ENCODE measurements at regions of chr11 and their contacts with region 1.

Region 1: GRCh38 chr11:119095066-119095880 is 6.4 kb downstream of the DPAGT1 start:
- DNase-seq: peak; percentile 99
- H3K4me3 ChIP-seq: peak overlapping the region; percentile 66 to 87 (median 68)
- H3K27ac ChIP-seq: peak overlapping the region; percentile 64
- H3K4me1 ChIP-seq: peaks cover 24% of the 10 kb centered on the region
- H3K27me3 ChIP-seq: no peaks in the 10 kb centered on the region
- CTCF ChIP-seq: no peak

Region 2: DNA sequence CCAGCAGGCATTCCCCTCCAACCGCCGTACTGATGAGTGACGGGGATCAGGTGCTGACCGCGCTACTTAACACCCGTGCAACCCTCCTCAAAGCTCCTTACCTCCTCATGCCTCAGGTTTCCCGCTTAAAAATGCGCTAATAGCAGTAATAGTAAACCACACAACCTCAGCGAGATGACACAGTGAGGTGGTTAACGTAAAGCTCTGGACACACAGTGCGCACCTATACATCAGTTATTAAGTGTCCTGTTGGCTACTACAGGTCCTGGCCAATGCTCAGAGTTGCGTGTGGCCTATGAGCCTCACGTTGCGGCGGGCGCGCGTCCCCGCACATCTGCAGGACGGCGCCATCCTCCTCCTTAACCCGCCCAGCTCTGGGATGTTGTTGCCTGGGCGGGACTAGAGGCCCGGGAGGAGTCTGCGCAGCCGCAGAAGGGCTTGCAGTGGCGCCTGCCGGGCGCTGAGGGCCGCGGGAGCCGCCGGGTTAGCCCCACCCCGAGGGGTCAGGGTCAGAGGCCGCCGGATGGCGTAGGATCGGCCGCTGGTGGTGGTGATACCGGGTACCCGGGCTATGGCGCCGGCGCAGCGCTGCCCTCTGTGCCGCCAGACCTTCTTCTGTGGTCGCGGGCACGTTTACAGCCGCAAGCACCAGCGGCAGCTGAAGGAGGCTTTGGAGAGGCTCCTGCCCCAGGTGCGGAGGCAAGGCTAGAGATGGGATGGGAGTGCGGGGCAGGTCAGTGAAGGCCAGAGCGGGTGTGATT is 97.5 kb before region 1 on chr11 and contains the start of gene CENATAC:
- CTCF ChIA-PET with region 1: no interaction called
- dilution Hi-C with region 1: no loop called
- in situ Hi-C with region 1: no loop called
- intact Hi-C with region 1: no loop called
- DNase-seq: peak; percentile 87
- H3K4me3 ChIP-seq: peak within 1 kb of the TSS; percentile 68 to 86 (median 80)
- H3K27ac ChIP-seq: peak within 1 kb of the TSS; percentile 81
- H3K4me1 ChIP-seq: peaks cover 30% of the 10 kb centered on the region
- H3K27me3 ChIP-seq: no peaks in the 10 kb centered on the region
- CTCF ChIP-seq: peak in 1 of 2 donors; percentile 17
- total RNA-seq, gene CENATAC: 37.8 to 46.9 TPM

Region 3: GRCh38 chr11:119057000-119057769 is 38.1 kb before region 1 on chr11 and contains the start of gene HYOU1:
- CTCF ChIA-PET with region 1: no interaction called
- dilution Hi-C with region 1: no loop called
- in situ Hi-C with region 1: no loop called
- intact Hi-C with region 1: loop called (anchors 1 kb)
- DNase-seq: peak; percentile 95
- H3K4me3 ChIP-seq: peak within 1 kb of the TSS; percentile 74 to 98 (median 95)
- H3K27ac ChIP-seq: peak within 1 kb of the TSS; percentile 62
- H3K4me1 ChIP-seq: peaks cover 20% of the 10 kb centered on the region
- H3K27me3 ChIP-seq: no peaks in the 10 kb centered on the region
- CTCF ChIP-seq: peak in 1 of 2 donors; percentile 36
- total RNA-seq, gene HYOU1: 160 to 187 TPM

Region 4: GRCh38 chr11:119084663-119085436 is 10.4 kb before region 1 on chr11 and contains the start of gene HMBS:
- CTCF ChIA-PET with region 1: no interaction called
- dilution Hi-C with region 1: no loop called
- in situ Hi-C with region 1: no loop called
- intact Hi-C with region 1: loop called (anchors 1 kb)
- DNase-seq: peak; percentile 91
- H3K4me3 ChIP-seq: peak within 1 kb of the TSS; percentile 89 to 96 (median 93)
- H3K27ac ChIP-seq: peak within 1 kb of the TSS; percentile 80
- H3K4me1 ChIP-seq: peaks cover 25% of the 10 kb centered on the region
- H3K27me3 ChIP-seq: no peaks in the 10 kb centered on the region
- CTCF ChIP-seq: no peak
- total RNA-seq, gene HMBS: 8.2 to 40.6 TPM

Region 5: DNA sequence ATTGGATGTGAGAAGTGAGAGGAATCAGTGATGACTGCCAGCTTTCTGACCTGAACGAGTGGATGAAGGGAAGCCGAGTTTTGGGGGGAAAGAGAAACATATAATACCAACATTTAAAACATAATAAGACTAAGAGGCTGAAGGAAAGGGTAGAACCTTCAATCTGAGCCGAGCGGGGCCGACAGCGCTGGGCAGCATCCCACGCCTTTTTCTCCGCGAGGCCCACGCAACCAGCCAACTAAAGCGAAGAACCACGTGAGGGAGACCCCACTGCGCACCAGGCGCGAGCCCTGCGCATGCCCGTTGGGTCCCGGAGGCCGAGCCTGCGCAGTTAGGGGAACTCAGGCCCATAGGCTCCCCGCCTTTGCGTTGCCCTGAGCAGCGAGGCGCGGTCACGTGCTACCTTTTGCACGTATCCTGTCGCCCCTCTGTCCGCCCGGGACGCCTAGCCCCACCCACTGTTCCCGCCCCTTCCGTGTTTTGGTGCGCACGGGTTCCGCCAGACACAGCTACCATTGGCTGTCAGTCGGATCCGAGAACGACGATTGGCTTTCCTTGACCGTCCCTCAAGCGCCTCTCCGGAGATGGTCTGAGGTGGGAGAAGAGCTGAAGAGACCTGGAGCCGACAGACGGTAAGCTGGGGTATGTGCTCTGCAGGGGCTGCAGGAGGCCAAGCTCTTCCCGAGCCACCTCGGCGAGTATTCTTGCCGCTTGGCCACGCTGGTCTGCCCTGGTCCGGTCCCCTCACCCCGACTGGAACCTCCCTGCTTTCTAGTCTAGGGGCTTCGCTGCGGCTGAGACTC is 25.9 kb after region 1 on chr11 and contains the start of gene HINFP:
- CTCF ChIA-PET with region 1: no interaction called
- dilution Hi-C with region 1: no loop called
- in situ Hi-C with region 1: no loop called
- intact Hi-C with region 1: loop called (anchors 1 kb)
- DNase-seq: peak; percentile 99
- H3K4me3 ChIP-seq: peak within 1 kb of the TSS; percentile 77 to 99 (median 94)
- H3K27ac ChIP-seq: peak within 1 kb of the TSS; percentile 79
- H3K4me1 ChIP-seq: peaks cover 12% of the 10 kb centered on the region
- H3K27me3 ChIP-seq: no peaks in the 10 kb centered on the region
- CTCF ChIP-seq: no peak
- total RNA-seq, gene HINFP: 23.7 to 26.8 TPM

Region 6: GRCh38 chr11:119168471-119169281 is 73.4 kb after region 1 on chr11 and contains the start of gene NLRX1:
- CTCF ChIA-PET with region 1: no interaction called
- dilution Hi-C with region 1: no loop called
- in situ Hi-C with region 1: no loop called
- intact Hi-C with region 1: loop called (anchors 2 kb)
- DNase-seq: peak; percentile 66
- H3K4me3 ChIP-seq: peak within 1 kb of the TSS; percentile 59 to 68 (median 66)
- H3K27ac ChIP-seq: peak within 1 kb of the TSS; percentile 84
- H3K4me1 ChIP-seq: peaks cover 35% of the 10 kb centered on the region
- H3K27me3 ChIP-seq: no peaks in the 10 kb centered on the region
- CTCF ChIP-seq: peak; percentile 83 to 93
- total RNA-seq, gene NLRX1: 13.5 to 15.5 TPM

Region 7: GRCh38 chr11:119196833-119197483 is 101.7 kb after region 1 on chr11:
- CTCF ChIA-PET with region 1: no interaction called
- dilution Hi-C with region 1: no loop called
- in situ Hi-C with region 1: loop called in 1 of 2 experiments (anchors 5 kb)
- intact Hi-C with region 1: loop called (anchors 1 kb)
- DNase-seq: peak; percentile 80
- H3K4me3 ChIP-seq: no peak overlapping the region
- H3K27ac ChIP-seq: no peak overlapping the region
- H3K4me1 ChIP-seq: no peaks in the 10 kb centered on the region
- H3K27me3 ChIP-seq: no peaks in the 10 kb centered on the region
- CTCF ChIP-seq: peak; percentile 72 to 74

Region 8: DNA sequence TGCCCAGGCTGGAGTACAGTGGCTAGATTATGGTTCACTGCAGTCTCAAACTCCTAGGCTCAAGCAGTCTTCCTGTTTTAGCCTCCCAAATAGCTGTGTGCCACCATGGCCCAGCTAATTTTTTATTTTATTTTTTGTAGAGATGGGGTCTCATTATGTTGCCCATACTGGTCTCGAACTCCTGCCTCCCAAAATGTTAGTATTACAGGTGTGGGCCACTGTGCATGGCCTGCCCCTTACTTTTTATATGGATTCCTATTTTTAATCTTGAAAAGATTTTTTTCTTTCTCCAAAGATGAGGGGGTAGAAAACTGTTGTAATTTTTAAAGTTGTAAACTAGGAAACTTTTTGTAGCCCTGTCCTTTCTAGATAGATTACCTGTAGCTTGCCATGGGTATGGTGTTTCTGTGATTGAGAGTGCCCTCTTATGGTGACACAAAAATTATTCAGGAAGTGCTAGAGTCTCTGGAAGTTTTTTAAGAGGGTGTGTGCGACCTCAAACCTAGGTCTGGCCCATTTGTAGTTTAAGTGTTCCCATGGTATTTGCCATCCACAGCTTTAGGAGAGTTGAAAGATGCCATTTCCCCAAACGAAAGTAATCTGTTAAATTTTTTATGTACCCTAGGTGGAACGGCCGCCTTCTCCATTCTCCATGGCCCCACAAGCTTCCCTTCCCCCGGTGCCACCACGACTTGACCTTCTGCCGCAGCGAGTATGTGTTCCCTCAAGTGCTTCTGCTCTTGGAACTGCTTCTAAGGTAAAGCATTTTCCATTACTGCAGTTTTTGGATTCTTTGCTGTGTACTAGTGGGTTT is 189.3 kb after region 1 on chr11:
- CTCF ChIA-PET with region 1: interaction called, 7 read pairs
- dilution Hi-C with region 1: no loop called
- in situ Hi-C with region 1: no loop called
- intact Hi-C with region 1: loop called (anchors 2 kb)
- DNase-seq: peak; percentile 35
- H3K4me3 ChIP-seq: no peak overlapping the region
- H3K27ac ChIP-seq: no peak overlapping the region
- H3K4me1 ChIP-seq: no peaks in the 10 kb centered on the region
- H3K27me3 ChIP-seq: no peaks in the 10 kb centered on the region
- CTCF ChIP-seq: peak in 1 of 2 donors; percentile 59

Measured in mammary epithelial cell (primary cell).